GM18951 (cell line): ENCODE measurements at regions of chr1 and their contacts with region 1.

Region 1: GRCh38 chr1:67489643-67490042 is 59.4 kb upstream of the SERBP1 start:
- POLR2A ChIP-seq: no peak

Region 2: GRCh38 chr1:66764994-66765578 is 724.6 kb before region 1 on chr1:
- in situ Hi-C with region 1: loop called (anchors 25 kb)
- POLR2A ChIP-seq: no peak

Region 3: GRCh38 chr1:66996018-66996682 is 493.5 kb before region 1 on chr1:
- in situ Hi-C with region 1: loop called (anchors 25 kb)
- POLR2A ChIP-seq: no peak

Region 4: DNA sequence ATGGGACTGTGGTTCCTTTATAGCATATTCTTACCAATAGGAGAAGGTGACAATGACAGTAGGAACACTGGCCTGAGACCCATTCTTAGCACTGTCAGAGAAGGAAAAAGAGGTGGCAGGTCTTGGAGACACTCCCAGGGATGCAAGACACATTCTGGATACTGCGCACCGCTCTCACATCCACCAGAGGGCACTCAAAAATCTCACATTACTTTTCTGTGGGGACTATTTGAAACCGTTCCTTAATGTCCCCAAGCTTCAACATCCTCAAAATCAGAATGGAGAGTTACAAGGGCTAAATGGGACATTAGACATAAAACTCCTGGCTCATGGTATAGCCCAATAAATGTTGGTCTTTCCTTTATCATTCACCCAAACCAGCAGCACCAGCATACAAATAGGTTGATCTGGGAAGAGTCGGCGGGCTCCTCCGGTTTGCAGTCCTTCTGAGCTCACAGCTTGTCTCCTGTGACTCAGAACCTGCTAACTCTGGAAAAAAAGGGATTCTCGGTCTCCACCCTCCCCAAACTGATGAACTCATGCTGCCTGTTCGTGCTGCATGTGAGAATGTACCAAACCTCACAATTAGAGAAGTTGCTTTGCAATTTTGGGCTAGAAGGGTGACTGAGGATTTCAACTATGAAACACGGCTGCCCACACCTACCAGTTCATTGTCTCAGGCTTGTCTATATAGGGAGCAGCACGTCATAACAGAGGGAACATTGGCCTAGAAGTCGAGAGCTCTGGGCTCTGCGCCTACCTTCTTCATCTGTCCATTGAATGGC is 141.8 kb before region 1 on chr1:
- in situ Hi-C with region 1: loop called (anchors 10 kb)
- POLR2A ChIP-seq: no peak

Region 5: DNA sequence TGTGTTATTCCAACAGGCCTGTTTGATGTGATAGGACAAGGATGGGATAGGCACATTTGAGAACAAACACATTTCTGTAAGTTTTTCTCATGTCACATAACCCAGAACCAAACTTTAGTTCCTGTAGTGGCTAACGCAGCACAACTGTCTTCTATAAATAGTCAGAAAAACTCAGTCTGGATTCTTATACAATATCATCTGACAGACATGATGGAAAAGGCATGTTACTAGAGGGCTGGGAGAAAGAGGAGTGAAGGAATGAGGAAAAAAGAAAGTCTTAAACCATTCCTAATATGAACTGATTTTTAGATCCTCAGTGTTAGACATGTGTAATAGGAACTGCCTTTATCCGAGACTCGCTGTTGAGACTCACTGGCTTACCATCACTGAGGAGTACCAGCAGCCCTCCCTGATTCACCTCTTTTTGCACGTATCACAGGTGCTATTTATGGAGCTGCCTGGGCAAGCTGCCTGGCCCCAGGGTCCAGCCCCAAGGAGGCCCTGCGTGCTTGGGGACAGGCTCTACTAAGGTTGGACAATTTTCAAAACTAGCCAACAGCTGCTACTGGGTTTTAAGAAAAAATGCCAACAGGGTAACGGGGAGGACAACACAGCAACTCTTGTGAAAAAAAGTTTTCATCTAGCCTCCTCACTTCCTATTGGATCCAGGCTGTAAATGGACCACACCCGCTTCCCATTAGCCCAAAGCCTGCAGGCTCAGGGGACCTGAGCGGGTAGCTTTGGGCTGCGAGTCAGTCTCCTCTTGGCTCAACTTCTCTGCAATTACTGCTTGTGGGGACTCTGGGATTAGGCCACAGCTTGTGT is 28.8 kb before region 1 on chr1:
- in situ Hi-C with region 1: no loop called
- POLR2A ChIP-seq: no peak